ENCODE measurements at regions of chr11 and their contacts with region 1.

Region 1: DNA sequence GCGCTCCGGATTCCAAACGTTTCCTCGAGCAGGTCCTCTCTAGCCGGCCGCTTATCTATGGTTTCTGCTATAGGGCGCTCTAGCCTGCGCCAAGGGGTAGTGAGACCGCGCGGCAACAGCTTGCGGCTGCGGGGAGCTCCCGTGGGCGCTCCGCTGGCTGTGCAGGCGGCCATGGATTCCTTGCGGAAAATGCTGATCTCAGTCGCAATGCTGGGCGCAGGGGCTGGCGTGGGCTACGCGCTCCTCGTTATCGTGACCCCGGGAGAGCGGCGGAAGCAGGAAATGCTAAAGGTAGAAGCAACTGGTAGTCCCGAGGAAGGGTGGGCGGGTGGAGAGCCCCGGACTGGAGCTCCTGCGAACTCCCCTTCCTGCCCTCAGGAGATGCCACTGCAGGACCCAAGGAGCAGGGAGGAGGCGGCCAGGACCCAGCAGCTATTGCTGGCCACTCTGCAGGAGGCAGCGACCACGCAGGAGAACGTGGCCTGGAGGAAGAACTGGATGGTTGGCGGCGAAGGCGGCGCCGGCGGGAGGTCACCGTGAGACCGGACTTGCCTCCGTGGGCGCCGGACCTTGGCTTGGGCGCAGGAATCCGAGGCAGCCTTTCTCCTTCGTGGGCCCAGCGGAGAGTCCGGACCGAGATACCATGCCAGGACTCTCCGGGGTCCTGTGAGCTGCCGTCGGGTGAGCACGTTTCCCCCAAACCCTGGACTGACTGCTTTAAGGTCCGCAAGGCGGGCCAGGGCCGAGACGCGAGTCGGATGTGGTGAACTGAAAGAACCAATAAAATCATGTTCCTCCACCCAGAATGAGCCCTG is at the starts of genes LBHD1 and UQCC3:
- DNase-seq: peak; percentile 50 to 89 (median 68)
- ATAC-seq: peak; percentile 74
- H3K4me3 ChIP-seq: peak within 1 kb of the TSS; percentile 98
- H3K4me3 Mint-ChIP-seq: peak within 1 kb of the TSS; percentile 91
- H3K27ac ChIP-seq: peak within 1 kb of the TSS; percentile 72 to 83
- H3K27ac Mint-ChIP-seq: peak within 1 kb of the TSS; percentile 87
- H3K4me1 ChIP-seq: peaks cover 55% of the 10 kb centered on the region
- H3K4me1 Mint-ChIP-seq: peaks cover 53% of the 10 kb centered on the region
- H3K27me3 ChIP-seq: no peaks in the 10 kb centered on the region
- H3K27me3 Mint-ChIP-seq: no peaks in the 10 kb centered on the region
- CTCF ChIP-seq: no peak
- total RNA-seq, gene LBHD1: 10.4 to 10.5 TPM
- total RNA-seq, gene UQCC3: 1.5 to 2.3 TPM

Region 2: GRCh38 chr11:62612366-62613290 is 59.2 kb before region 1 on chr11 and contains the starts of genes EML3 and ROM1:
- CTCF ChIA-PET with region 1: interaction called, 6 read pairs
- POLR2A ChIA-PET with region 1: interaction called, 10 read pairs
- intact Hi-C with region 1: no loop called
- DNase-seq: peak; percentile 77 to 94 (median 89)
- ATAC-seq: peak; percentile 76
- H3K4me3 ChIP-seq: peak within 1 kb of the TSS; percentile 92
- H3K4me3 Mint-ChIP-seq: peak within 1 kb of the TSS; percentile 90
- H3K27ac ChIP-seq: peak within 1 kb of the TSS; percentile 78 to 90
- H3K27ac Mint-ChIP-seq: peak within 1 kb of the TSS; percentile 94
- H3K4me1 ChIP-seq: peaks cover 63% of the 10 kb centered on the region
- H3K4me1 Mint-ChIP-seq: peaks cover 44% of the 10 kb centered on the region
- H3K27me3 ChIP-seq: no peaks in the 10 kb centered on the region
- H3K27me3 Mint-ChIP-seq: no peaks in the 10 kb centered on the region
- CTCF ChIP-seq: peak; percentile 87
- total RNA-seq, gene EML3: 142 to 144 TPM
- total RNA-seq, gene ROM1: 0.42 to 0.71 TPM

Region 3: GRCh38 chr11:62645956-62646824 is 25.6 kb before region 1 on chr11 and contains the start of gene GANAB:
- CTCF ChIA-PET with region 1: no interaction called
- POLR2A ChIA-PET with region 1: interaction called, 17 read pairs
- intact Hi-C with region 1: loop called in 1 of 2 experiments (anchors 1 kb)
- DNase-seq: peak; percentile 97 to 100 (median 99)
- ATAC-seq: peak; percentile 98
- H3K4me3 ChIP-seq: peak within 1 kb of the TSS; percentile 98
- H3K4me3 Mint-ChIP-seq: peak within 1 kb of the TSS; percentile 96
- H3K27ac ChIP-seq: peak within 1 kb of the TSS; percentile 82 to 97
- H3K27ac Mint-ChIP-seq: peak within 1 kb of the TSS; percentile 99
- H3K4me1 ChIP-seq: peaks cover 42% of the 10 kb centered on the region
- H3K4me1 Mint-ChIP-seq: peaks cover 29% of the 10 kb centered on the region
- H3K27me3 ChIP-seq: no peaks in the 10 kb centered on the region
- H3K27me3 Mint-ChIP-seq: no peaks in the 10 kb centered on the region
- CTCF ChIP-seq: no peak
- total RNA-seq, gene GANAB: 181 to 182 TPM

Region 4: GRCh38 chr11:62705880-62706849 is 34.4 kb after region 1 on chr11:
- CTCF ChIA-PET with region 1: no interaction called
- POLR2A ChIA-PET with region 1: interaction called, 28 read pairs
- intact Hi-C with region 1: loop called (anchors 5 kb)
- DNase-seq: peak; percentile 90 to 97 (median 94)
- ATAC-seq: peak; percentile 62
- H3K4me3 ChIP-seq: peak overlapping the region; percentile 79
- H3K4me3 Mint-ChIP-seq: peak overlapping the region; percentile 86
- H3K27ac ChIP-seq: peak overlapping the region; percentile 65 to 84
- H3K27ac Mint-ChIP-seq: peak overlapping the region; percentile 92
- H3K4me1 ChIP-seq: peaks cover 49% of the 10 kb centered on the region
- H3K4me1 Mint-ChIP-seq: peaks cover 42% of the 10 kb centered on the region
- H3K27me3 ChIP-seq: no peaks in the 10 kb centered on the region
- H3K27me3 Mint-ChIP-seq: no peaks in the 10 kb centered on the region
- CTCF ChIP-seq: no peak

Region 5: DNA sequence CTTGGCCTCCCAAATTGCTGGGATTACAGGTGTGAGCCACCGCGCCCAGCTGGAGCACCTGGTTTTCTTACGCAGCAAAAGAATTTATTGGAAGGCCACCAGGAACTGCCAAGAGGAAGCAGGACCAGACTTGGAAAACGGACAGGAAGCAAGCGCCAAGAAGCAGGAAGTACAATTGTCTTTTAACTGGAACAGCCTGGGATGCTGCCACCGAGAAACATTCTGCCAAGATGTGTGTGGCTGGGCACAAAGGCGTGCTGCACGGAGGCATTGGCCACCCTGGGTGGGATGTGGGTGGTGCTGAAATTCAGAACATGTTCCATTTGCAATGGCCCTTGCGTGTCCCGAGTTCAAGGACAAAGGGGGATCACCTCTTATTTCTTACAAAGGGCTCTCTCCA is 224.3 kb after region 1 on chr11:
- CTCF ChIA-PET with region 1: no interaction called
- POLR2A ChIA-PET with region 1: no interaction called
- intact Hi-C with region 1: no loop called
- DNase-seq: no peak
- ATAC-seq: no peak
- H3K4me3 ChIP-seq: no peak overlapping the region
- H3K4me3 Mint-ChIP-seq: no peak overlapping the region
- H3K27ac ChIP-seq: no peak overlapping the region
- H3K27ac Mint-ChIP-seq: no peak overlapping the region
- H3K4me1 ChIP-seq: no peaks in the 10 kb centered on the region
- H3K4me1 Mint-ChIP-seq: no peaks in the 10 kb centered on the region
- H3K27me3 ChIP-seq: no peaks in the 10 kb centered on the region
- H3K27me3 Mint-ChIP-seq: peaks cover 8% of the 10 kb centered on the region
- CTCF ChIP-seq: no peak

Measured in CD4-positive, alpha-beta T cell (primary cell).